ENCODE measurements at regions of chr20 and their contacts with region 1.

Region 1: DNA sequence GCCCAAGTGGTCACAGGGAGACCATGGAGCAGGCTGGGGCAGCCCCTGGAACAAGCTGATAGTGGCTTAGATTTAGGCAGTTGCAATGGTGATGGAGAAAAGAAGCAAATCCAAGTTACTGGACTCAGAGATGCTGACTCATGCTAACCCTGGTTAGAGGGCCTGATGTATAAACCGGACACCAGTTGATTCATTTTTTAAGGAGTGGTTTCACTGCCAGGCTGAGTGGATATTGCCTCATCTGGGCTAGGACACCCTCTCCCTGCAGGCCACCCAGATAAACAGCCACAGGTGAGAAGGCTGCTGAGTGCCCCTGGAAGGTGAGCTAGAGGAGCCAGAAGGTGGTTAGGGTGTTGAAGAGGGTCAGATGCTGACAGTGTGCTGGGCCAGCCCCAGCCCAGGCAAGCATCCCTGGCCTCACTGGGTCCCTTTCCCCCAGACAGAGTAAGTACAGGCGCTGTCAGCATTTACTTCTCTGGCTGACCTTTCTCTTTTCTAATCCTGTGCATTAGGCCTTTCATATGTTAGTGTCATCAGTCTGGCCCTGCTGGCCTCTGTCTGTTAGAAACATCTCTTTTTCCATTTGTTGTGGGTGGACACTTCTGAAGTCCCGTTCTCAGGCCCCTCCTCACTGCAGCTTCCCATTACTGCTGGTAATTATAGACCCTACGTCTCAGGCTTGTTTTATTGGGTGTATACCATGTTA is 13.4 kb downstream of the EPB41L1 start:
- DNase-seq: no peak
- H3K4me3 ChIP-seq: no peak overlapping the region
- H3K27ac ChIP-seq: no peak overlapping the region
- H3K4me1 ChIP-seq: no peaks in the 10 kb centered on the region
- H3K27me3 ChIP-seq: peaks cover 0 to 4% (median 0%) of the 10 kb centered on the region in 5 experiments

Region 2: GRCh38 chr20:36030149-36030548 is 137.8 kb before region 1 on chr20:
- CTCF ChIA-PET with region 1: no interaction called
- POLR2A ChIA-PET with region 1: no interaction called
- DNase-seq: no peak
- H3K4me3 ChIP-seq: no peak overlapping the region
- H3K27ac ChIP-seq: no peak overlapping the region
- H3K4me1 ChIP-seq: peaks cover 0 to 2% (median under 1%) of the 10 kb centered on the region in 4 experiments
- H3K27me3 ChIP-seq: peaks cover 0 to 3% (median 0%) of the 10 kb centered on the region in 5 experiments

Region 3: DNA sequence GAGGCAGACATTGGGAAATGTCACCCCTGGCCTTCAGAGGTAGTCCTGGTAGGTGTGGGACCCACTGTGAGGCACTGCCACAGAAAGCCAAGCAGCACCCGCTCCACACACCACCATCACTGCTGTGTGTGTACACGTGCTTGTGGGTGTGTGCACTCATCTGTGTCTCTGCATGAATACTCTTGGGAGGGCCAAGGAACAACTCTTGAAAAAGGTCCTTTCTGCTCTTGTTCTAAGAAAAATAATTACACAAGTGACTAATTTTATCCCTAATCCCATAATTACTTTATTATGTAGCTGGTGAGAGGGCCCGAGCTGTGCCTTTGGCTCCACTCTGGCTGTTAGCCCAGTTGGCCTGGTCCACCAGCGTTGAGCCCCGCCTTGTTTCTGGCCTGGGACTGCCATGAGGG is 35.2 kb before region 1 on chr20:
- CTCF ChIA-PET with region 1: no interaction called
- POLR2A ChIA-PET with region 1: no interaction called
- DNase-seq: no peak
- H3K4me3 ChIP-seq: no peak overlapping the region
- H3K27ac ChIP-seq: no peak overlapping the region
- H3K4me1 ChIP-seq: no peaks in the 10 kb centered on the region
- H3K27me3 ChIP-seq: no peaks in the 10 kb centered on the region

Region 4: DNA sequence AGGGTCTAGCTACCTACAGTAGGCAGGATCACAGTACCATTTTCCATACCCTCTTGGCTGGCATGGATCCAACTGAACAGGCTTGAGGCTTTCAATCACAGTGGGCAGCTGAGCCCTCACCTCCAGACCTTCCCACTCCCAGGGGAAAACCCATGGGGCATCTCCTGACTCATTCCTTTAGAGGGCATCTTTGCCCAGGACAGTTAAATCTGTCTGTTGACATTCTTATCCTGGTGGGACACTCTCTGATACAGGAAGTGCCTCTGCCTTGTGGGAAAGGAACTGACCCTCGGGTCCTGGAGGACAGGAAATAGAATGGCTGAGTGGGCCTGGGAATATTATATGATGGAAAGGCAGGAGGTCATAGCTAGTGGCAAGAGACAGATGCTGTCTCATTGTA is 23.6 kb before region 1 on chr20:
- CTCF ChIA-PET with region 1: no interaction called
- POLR2A ChIA-PET with region 1: no interaction called
- DNase-seq: no peak
- H3K4me3 ChIP-seq: no peak overlapping the region
- H3K27ac ChIP-seq: no peak overlapping the region
- H3K4me1 ChIP-seq: peaks cover 2 to 10% (median 8%) of the 10 kb centered on the region in 4 experiments
- H3K27me3 ChIP-seq: peaks cover 0 to 7% (median 0%) of the 10 kb centered on the region in 5 experiments

Region 5: GRCh38 chr20:36154700-36155628 is 13.0 kb before region 1 on chr20 and contains the start of gene EPB41L1:
- CTCF ChIA-PET with region 1: interaction called, 13 read pairs
- POLR2A ChIA-PET with region 1: interaction called, 4 read pairs
- DNase-seq: no peak
- H3K4me3 ChIP-seq: peak within 1 kb of the TSS; percentile 24 to 74 (median 49)
- H3K27ac ChIP-seq: no peak within 1 kb of the TSS
- H3K4me1 ChIP-seq: peaks cover 0 to 20% (median 10%) of the 10 kb centered on the region in 4 experiments
- H3K27me3 ChIP-seq: peaks cover 0 to 20% (median 7%) of the 10 kb centered on the region in 5 experiments

Measured in common myeloid progenitor, CD34-positive (primary cell).